Lower lobe of right lung (tissue), 2 donors: ENCODE measurements at regions of chr14 and their contacts with region 1.

Region 1: GRCh38 chr14:75132382-75133086 is 5.7 kb upstream of the NEK9 start:
- DNase-seq: no peak
- ATAC-seq: peak; percentile 87 to 89
- H3K4me3 ChIP-seq: no peak overlapping the region
- H3K27ac ChIP-seq: peak overlapping the region; percentile 50
- H3K4me1 ChIP-seq: peaks cover 36% of the 10 kb centered on the region
- H3K27me3 ChIP-seq: no peaks in the 10 kb centered on the region
- CTCF ChIP-seq: peak; percentile 72

Region 2: DNA sequence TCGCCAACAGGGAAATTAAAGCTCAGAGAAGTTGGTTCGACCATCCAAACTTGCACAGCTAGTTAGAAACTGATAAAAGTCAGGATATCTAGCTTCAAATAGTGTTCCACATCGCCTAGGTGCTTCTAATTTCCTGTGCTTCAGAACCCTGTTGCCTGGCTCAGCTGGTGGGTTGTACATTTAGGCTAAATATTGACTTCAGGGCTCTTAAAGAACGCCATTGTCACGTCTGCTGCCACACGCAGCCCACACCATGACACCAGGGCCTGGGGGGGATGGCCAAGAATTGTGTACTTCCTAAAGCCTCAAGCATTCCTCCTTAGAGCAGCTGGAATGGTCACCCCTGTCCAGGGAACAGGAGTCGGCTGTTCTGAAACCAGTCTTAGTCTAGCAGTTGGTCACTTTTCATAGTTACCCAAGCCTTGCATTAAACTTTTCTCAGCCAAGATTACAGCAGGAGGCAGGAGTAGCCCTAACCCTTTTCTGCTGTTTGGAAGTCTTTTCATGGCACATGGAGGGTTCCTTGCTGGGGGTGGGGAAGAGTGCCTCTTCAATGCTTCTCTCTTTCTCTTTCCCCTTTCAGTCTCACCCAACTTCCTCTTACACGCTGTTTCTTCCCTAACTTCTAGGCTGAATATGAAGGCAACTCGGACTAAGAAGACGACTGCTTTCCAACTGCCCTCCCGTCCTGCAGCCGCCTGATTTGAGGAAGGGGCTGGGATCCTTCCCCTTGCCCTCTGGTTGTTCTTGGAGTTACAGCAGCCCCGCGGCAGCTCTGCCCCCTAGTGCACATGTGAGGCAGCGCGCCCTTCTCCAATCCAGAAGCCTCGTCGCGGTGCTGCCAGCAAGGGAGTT is 163.2 kb after region 1 on chr14:
- intact Hi-C with region 1: loop called (anchors 5 kb)
- DNase-seq: peak; percentile 86
- ATAC-seq: peak; percentile 40 to 43
- H3K4me3 ChIP-seq: peak overlapping the region; percentile 72
- H3K27ac ChIP-seq: peak overlapping the region; percentile 97
- H3K4me1 ChIP-seq: peaks cover 64% of the 10 kb centered on the region
- H3K27me3 ChIP-seq: no peaks in the 10 kb centered on the region
- CTCF ChIP-seq: peak; percentile 96

Region 3: GRCh38 chr14:75487155-75487671 is 354.7 kb after region 1 on chr14:
- intact Hi-C with region 1: loop called (anchors 10 kb)
- DNase-seq: no peak
- ATAC-seq: no peak
- H3K4me3 ChIP-seq: no peak overlapping the region
- H3K27ac ChIP-seq: no peak overlapping the region
- H3K4me1 ChIP-seq: no peaks in the 10 kb centered on the region
- H3K27me3 ChIP-seq: no peaks in the 10 kb centered on the region
- CTCF ChIP-seq: no peak